Motor neuron (in vitro differentiated cells): ENCODE measurements at regions of chr1 and their contacts with region 1.

Region 1: DNA sequence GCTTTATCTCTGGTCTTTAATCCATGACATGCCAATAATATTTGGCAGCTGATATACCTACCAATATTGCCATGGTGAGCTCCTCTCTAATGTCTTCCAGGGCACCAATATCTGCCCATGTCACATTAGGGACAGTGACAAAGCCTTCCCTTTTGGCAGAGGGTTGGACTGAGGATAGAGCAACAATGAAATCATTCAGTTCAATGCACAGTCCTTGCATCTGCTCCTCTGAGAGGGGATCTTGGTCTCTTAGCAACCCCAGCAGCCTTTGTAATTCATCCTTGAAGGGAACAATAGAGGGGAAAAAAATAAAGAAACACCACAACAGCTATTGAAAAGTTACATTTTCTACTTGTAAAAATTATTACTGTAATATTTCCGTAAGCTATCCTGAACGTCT is 42.3 kb downstream of the NVL start:
- ATAC-seq: peak in 5 of 8 experiments; percentile 100
- H3K4me3 ChIP-seq: no peak overlapping the region
- H3K27ac ChIP-seq: peak overlapping the region in 1 of 2 donors; percentile 25
- H3K4me1 ChIP-seq: peaks cover 13 to 20% of the 10 kb centered on the region in 2 donors

Region 2: DNA sequence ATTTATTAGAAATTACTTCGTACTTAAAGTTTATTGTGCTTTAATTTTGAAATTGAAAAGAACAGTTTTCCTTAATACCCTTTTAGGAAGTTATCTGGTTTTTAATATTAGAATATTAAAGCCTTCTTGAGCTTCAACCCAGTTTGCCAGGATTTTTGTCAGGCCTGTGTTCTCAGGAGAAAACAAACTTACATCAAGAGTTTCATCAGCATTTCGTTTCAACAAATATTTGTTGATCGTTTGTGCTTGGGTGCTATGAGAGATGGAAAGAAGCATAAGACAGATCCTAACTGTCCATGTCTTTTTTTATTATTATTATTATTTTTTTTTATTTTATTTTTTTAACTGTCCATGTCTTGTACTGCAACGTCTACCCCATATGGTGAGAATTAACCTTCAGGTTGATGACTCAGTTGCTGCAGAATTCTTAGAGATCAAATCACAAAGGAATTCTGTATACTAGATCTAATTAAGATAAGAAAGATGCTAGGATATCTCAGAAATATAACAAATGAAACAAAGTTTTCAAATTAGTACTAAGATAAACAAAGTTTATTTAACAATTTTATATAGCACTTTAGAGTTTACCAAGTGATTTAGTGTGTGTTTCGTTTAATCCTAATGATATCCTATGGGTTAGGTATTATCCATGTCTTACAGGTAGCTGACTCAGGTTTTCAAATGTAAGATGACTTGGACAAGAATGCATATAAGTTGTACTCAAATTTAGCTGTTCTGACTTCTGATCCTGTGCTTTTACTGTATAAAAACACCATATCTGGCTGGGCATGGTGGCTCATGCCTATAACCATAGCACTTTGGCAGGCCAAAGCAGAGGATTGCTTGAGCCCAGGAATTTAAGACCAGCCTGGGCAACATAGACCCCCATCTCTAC is 159.5 kb before region 1 on chr1:
- in situ Hi-C with region 1: loop called in 1 of 9 experiments (anchors 25 kb)
- ATAC-seq: no peak
- H3K4me3 ChIP-seq: no peak overlapping the region
- H3K27ac ChIP-seq: no peak overlapping the region
- H3K4me1 ChIP-seq: no peaks in the 10 kb centered on the region

Region 3: GRCh38 chr1:224980181-224980580 is 692.5 kb after region 1 on chr1:
- in situ Hi-C with region 1: no loop called
- ATAC-seq: no peak
- H3K4me3 ChIP-seq: no peak overlapping the region
- H3K27ac ChIP-seq: no peak overlapping the region
- H3K4me1 ChIP-seq: no peaks in the 10 kb centered on the region